ENCODE measurements at regions of chr17 and their contacts with region 1.

Region 1: GRCh38 chr17:7351665-7352501 is at the start of gene KCTD11:
- DNase-seq: peak; percentile 84 to 91
- ATAC-seq: peak; percentile 70 to 81
- H3K4me3 ChIP-seq: peak within 1 kb of the TSS; percentile 71 to 100 (median 84)
- H3K27ac ChIP-seq: peak within 1 kb of the TSS; percentile 93 to 98 (median 96)
- H3K4me1 ChIP-seq: peaks cover 22 to 40% of the 10 kb centered on the region in 2 donors
- H3K27me3 ChIP-seq: no peaks in the 10 kb centered on the region
- CTCF ChIP-seq: peak in 3 of 5 experiments; percentile 58 to 74 (median 60)
- POLR2A ChIP-seq: peak; percentile 72 to 75
- total RNA-seq, gene KCTD11: 3.6 to 7.0 (median 4.6) TPM

Region 2: DNA sequence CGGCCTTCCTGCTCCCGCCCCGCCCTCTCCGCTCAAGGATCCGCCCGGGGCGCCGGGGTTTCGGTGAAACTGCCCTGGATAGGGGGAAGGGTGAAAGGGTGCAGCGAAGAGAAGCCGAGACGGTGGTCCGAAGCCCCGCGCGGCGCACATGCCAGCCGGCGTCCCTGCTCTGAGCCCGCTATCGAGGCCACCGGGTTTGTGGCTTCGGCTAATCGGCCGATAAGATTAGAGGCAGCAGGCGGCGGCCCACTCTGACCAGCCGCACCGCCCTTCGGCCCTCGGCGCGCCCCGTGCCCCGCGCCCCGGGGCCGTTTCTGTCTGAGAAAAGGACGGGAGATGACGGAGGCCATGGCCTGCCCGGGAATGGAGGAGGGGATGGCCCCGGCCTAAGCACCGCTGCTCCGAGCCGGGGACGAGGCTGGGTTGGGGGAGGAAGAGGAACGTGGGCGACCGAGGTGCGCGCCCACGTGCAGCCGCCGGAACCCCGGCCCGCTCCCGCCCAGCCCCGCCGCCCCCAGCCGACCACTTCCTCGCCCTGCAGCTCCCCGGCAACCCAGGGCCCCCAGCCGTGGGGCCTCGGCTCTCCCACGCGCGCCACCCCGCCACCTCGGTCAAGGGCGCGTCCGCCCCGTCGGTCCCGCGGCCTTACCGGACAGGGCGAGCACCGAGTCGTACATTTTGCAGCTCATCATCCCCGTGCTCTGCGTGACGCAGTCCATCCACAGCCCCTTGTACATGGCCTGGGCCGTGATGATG is 90.5 kb before region 1 on chr17:
- in situ Hi-C with region 1: no loop called
- intact Hi-C with region 1: no loop called
- DNase-seq: no peak
- ATAC-seq: peak; percentile 16 to 44
- H3K4me3 ChIP-seq: peak overlapping the region; percentile 52 to 63 (median 53)
- H3K27ac ChIP-seq: peak overlapping the region in 1 of 4 donors; percentile 11
- H3K4me1 ChIP-seq: peaks cover 5 to 9% of the 10 kb centered on the region in 2 donors
- H3K27me3 ChIP-seq: peaks cover 41 to 51% (median 43%) of the 10 kb centered on the region in 3 donors
- CTCF ChIP-seq: no peak
- POLR2A ChIP-seq: no peak

Region 3: DNA sequence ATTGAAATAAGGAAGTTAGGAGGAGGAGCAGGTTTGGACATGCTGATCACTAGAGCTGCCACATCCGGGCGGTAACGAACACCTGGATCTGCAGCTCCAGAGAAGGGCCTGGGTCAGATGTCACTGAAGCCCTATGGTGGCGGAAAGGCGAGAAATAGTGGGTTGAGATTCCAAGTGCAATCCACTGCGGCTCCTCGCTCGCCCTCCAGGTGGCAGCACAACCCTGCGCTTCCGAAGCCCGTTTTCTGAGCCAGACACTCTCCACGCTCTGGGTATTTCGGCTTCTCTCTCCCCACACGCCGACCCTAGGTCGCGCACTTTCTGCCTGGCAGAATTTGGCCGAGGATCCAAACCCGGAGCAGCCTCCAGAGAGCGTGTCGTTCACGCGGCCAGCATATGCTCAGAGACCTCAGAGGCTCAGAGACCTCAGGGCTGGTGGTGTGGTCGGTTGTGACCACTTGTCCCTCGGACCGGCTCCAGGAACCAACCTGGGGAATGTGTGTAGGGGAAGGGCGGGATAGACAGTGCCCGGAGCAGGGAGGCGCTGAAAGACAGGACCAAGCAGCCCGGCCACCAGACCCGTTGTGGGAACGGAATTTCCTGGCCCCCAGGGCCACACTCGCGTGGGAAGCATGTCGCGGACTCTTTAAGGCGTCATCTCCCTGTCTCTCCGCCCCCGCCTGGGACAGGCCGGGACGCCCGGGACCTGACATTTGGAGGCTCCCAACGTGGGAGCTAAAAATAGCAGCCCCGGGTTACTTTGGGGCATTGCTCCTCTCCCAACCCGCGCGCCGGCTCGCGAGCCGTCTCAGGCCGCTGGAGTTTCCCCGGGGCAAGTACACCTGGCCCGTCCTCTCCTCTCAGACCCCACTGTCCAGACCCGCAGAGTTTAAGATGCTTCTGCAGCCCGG is 71.1 kb before region 1 on chr17:
- in situ Hi-C with region 1: no loop called
- intact Hi-C with region 1: loop called (anchors 2 kb)
- DNase-seq: peak; percentile 83 to 91
- ATAC-seq: peak; percentile 50 to 53
- H3K4me3 ChIP-seq: peak overlapping the region; percentile 70 to 80 (median 76)
- H3K27ac ChIP-seq: peak overlapping the region; percentile 95 to 100 (median 98)
- H3K4me1 ChIP-seq: peaks cover 33% of the 10 kb centered on the region in 2 donors
- H3K27me3 ChIP-seq: no peaks in the 10 kb centered on the region
- CTCF ChIP-seq: peak; percentile 95 to 99 (median 98)
- POLR2A ChIP-seq: peak; percentile 51 to 66

Region 4: GRCh38 chr17:7394452-7395191 is 42.7 kb after region 1 on chr17 and contains the start of gene PLSCR3:
- in situ Hi-C with region 1: no loop called
- intact Hi-C with region 1: loop called (anchors 1 kb)
- DNase-seq: peak; percentile 64 to 81
- ATAC-seq: peak; percentile 89 to 91
- H3K4me3 ChIP-seq: peak within 1 kb of the TSS; percentile 73 to 97 (median 88)
- H3K27ac ChIP-seq: peak within 1 kb of the TSS; percentile 83 to 97 (median 90)
- H3K4me1 ChIP-seq: peaks cover 9 to 10% of the 10 kb centered on the region in 2 donors
- H3K27me3 ChIP-seq: no peaks in the 10 kb centered on the region
- CTCF ChIP-seq: peak; percentile 32 to 61 (median 42)
- POLR2A ChIP-seq: peak; percentile 93
- total RNA-seq, gene PLSCR3: 8.9 to 20.3 (median 14.4) TPM

Region 5: GRCh38 chr17:7435221-7435675 is 83.4 kb after region 1 on chr17 and contains the start of gene TMEM102:
- in situ Hi-C with region 1: no loop called
- intact Hi-C with region 1: loop called (anchors 2 kb)
- DNase-seq: peak; percentile 95 to 97
- ATAC-seq: peak; percentile 84 to 88
- H3K4me3 ChIP-seq: peak within 1 kb of the TSS; percentile 53 to 63 (median 58)
- H3K27ac ChIP-seq: peak within 1 kb of the TSS; percentile 80 to 100 (median 94)
- H3K4me1 ChIP-seq: peaks cover 29 to 45% of the 10 kb centered on the region in 2 donors
- H3K27me3 ChIP-seq: peaks cover 0 to 4% (median 0%) of the 10 kb centered on the region in 3 donors
- CTCF ChIP-seq: no peak
- POLR2A ChIP-seq: peak; percentile 11 to 14
- total RNA-seq, gene TMEM102: 0.92 to 3.9 (median 2.3) TPM

Region 6: DNA sequence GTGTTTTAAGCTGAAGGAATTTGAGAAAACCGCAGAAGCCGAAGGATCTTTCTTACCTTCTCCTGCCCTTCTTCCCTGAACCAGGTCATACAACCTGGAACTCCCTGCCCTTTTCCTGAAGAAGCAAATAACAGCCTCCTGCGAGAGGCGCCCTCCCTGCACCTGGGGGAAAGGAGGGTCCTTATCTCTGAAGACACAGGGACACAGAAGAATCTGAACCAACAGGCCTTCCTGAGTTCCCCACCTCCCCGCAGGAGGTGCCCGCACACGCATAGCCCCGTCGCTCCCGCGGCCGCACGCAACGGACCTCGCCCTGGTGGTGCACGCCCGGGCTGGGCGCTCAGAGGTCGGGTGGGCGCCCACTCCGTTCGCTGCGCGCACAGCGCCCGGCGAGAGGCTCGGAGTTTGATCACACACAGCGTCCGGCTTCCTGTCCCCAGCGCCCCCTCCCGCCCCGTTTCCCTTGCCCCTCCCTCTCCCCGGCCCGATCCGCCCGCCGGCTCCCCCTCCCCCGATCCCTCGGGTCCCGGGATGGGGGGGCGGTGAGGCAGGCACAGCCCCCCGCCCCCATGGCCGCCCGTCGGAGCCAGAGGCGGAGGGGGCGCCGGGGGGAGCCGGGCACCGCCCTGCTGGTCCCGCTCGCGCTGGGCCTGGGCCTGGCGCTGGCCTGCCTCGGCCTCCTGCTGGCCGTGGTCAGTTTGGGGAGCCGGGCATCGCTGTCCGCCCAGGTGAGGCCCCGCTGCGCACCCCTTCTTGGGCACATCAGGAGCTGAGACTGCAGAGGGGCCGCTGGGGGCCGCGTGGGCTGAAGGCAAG is 196.9 kb after region 1 on chr17 and contains the start of gene TNFSF12:
- in situ Hi-C with region 1: loop called in 1 of 4 experiments (anchors 25 kb)
- intact Hi-C with region 1: no loop called
- DNase-seq: peak; percentile 35 to 41
- ATAC-seq: peak; percentile 68 to 71
- H3K4me3 ChIP-seq: peak within 1 kb of the TSS; percentile 62 to 85 (median 66)
- H3K27ac ChIP-seq: peak within 1 kb of the TSS; percentile 62 to 81 (median 76)
- H3K4me1 ChIP-seq: peaks cover 4 to 13% of the 10 kb centered on the region in 2 donors
- H3K27me3 ChIP-seq: no peaks in the 10 kb centered on the region
- CTCF ChIP-seq: peak in 2 of 5 experiments; percentile 17 to 39
- POLR2A ChIP-seq: peak in 1 of 2 donors; percentile 28
- total RNA-seq, gene TNFSF12: 7.9 to 26.1 (median 16.9) TPM